ENCODE measurements at regions of chr7 and their contacts with region 1.

Region 1: GRCh38 chr7:73718905-73719805 is at the start of gene STX1A:
- DNase-seq: peak; percentile 82
- H3K4me3 ChIP-seq: peak within 1 kb of the TSS; percentile 99
- H3K27ac ChIP-seq: peak within 1 kb of the TSS; percentile 77
- H3K4me1 ChIP-seq: peaks cover 38% of the 10 kb centered on the region
- H3K27me3 ChIP-seq: no peaks in the 10 kb centered on the region
- CTCF ChIP-seq: no peak
- total RNA-seq, gene STX1A: 37.8 and 47.1 TPM in 2 replicates

Region 2: GRCh38 chr7:73667344-73668102 is 51.6 kb before region 1 on chr7 and contains the start of gene VPS37D:
- CTCF ChIA-PET with region 1: no interaction called
- POLR2A ChIA-PET with region 1: no interaction called
- intact Hi-C with region 1: loop called (anchors 5 kb)
- DNase-seq: peak; percentile 94
- H3K4me3 ChIP-seq: peak within 1 kb of the TSS; percentile 87
- H3K27ac ChIP-seq: peak within 1 kb of the TSS; percentile 68
- H3K4me1 ChIP-seq: peaks cover 6% of the 10 kb centered on the region
- H3K27me3 ChIP-seq: no peaks in the 10 kb centered on the region
- CTCF ChIP-seq: peak; percentile 64
- total RNA-seq, gene VPS37D: 8.7 and 10.1 TPM in 2 replicates

Region 3: DNA sequence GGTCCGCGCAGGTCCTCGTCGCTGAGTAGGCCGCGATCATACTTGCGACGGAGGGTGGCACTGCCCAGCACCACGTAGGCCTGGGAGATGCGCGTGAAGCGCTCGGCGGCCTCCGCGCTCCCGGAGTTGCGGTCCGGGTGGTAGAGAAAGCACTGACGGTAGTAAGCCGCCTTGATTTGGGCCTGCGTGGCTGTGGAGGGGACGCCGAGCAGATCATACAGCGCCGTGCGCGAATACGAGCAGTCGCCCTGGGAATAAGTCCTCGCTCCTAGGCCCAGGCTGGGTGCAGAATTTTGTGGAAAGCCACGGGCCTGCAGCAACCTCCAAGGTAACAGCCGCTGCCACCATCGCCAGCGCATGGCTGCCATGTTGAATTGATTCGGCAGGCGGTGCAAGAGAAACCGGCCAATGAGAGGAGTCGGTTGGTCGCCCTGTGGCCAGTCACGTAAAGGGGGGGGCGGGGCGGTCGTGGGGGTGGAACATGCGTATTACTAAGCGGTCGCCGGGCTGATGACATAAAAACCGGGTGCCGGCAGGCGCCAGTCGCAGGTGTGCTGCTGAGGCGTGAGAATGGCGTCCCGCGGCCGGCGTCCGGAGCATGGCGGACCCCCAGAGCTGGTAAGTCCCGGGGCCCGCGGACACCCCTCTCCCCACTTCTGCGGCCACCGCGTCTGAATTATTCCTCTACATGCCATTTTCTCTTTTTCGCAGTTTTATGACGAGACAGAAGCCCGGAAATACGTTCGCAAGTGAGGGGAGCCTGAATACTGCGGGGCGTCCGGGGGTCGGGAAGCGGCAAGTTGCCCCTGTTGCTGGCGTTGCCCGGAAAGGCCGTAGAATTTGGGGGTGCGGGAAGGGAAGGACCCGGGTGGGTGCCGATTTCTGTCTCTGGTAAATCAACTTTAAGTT is 35.8 kb before region 1 on chr7 and contains the starts of genes BUD23 and DNAJC30:
- CTCF ChIA-PET with region 1: no interaction called
- POLR2A ChIA-PET with region 1: no interaction called
- intact Hi-C with region 1: loop called (anchors 1 kb)
- DNase-seq: peak; percentile 97
- H3K4me3 ChIP-seq: peak within 1 kb of the TSS; percentile 72
- H3K27ac ChIP-seq: peak within 1 kb of the TSS; percentile 88
- H3K4me1 ChIP-seq: peaks cover 16% of the 10 kb centered on the region
- H3K27me3 ChIP-seq: no peaks in the 10 kb centered on the region
- CTCF ChIP-seq: no peak
- total RNA-seq, gene BUD23: 133 and 138 TPM in 2 replicates
- total RNA-seq, gene DNAJC30: 11.1 and 11.8 TPM in 2 replicates

Region 4: GRCh38 chr7:73701357-73701995 is 17.7 kb before region 1 on chr7:
- CTCF ChIA-PET with region 1: interaction called, 7 read pairs
- POLR2A ChIA-PET with region 1: no interaction called
- intact Hi-C with region 1: loop called (anchors 2 kb)
- DNase-seq: peak; percentile 58
- H3K4me3 ChIP-seq: no peak overlapping the region
- H3K27ac ChIP-seq: peak overlapping the region; percentile 68
- H3K4me1 ChIP-seq: peaks cover 34% of the 10 kb centered on the region
- H3K27me3 ChIP-seq: no peaks in the 10 kb centered on the region
- CTCF ChIP-seq: peak; percentile 58

Region 5: DNA sequence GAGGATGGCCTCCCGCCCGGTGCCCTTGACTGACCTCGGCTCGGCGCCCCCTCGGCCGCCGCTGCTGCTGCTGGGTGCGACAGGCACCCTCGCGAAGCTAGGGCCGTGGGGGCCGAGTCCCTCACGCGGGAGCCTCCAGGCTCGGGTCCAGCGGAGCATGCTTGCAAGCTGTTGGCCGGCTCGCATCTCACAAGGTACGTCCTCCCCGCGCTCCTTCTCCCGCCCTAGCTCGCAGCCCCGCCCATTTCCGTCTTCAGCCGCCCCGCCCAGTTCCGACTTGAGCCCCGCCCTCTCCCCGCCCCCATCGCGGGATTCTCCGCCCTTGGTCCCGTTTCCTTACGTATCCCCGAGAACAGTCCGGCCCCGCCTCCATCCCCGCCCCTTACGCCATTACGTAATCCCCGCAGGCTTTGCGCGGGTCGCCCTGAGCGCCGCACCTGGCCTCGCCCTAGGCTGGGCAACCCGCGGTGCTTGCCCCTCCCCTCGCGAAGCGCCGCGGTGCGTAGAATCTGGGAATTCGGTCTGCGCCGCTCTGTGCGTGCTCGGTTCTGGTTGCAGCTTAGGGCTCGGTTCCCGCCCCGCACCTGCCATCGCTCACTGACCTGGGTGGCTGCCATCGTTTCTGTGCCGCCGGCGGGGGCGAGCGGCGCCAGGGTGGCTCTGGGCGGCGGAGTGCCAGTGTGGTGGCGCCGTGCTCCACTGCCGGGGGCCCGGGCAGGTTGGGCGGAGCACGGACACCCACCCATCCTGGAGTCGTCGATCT is 19.6 kb after region 1 on chr7 and contains the start of gene ABHD11:
- CTCF ChIA-PET with region 1: interaction called, 5 read pairs
- POLR2A ChIA-PET with region 1: no interaction called
- intact Hi-C with region 1: loop called (anchors 2 kb)
- DNase-seq: peak; percentile 94
- H3K4me3 ChIP-seq: peak within 1 kb of the TSS; percentile 72
- H3K27ac ChIP-seq: peak within 1 kb of the TSS; percentile 84
- H3K4me1 ChIP-seq: peaks cover 7% of the 10 kb centered on the region
- H3K27me3 ChIP-seq: no peaks in the 10 kb centered on the region
- CTCF ChIP-seq: no peak
- total RNA-seq, gene ABHD11: 20.7 and 22.9 TPM in 2 replicates

Measured in A673 (cell line).